Sciatic nerve (tissue), 2 donors: ENCODE measurements at regions of chr1 and their contacts with region 1.

Region 1: DNA sequence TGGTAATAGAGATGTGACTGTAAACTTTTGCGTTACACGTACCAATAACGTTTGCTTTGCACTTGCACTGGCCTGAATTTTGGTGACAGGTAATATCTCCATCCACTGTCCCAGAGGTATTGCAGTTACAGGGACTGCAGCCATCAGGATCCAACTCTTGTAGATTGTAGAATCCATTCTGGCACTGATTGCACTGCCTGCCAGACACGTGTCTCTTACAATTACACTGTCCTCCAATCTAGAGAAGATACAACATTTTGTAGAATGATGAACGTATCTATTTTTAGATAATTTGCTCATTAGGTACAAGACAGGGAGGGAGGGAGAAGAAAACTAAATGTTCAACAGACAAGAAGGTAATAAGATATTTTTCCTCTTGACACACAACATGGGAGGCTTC is 172.4 kb downstream of the USH2A start:
- DNase-seq: no peak
- ATAC-seq: no peak

Region 2: GRCh38 chr1:214864896-214865688 is 1385.8 kb before region 1 on chr1:
- intact Hi-C with region 1: loop called (anchors 5 kb)
- DNase-seq: no peak
- ATAC-seq: no peak